CD4-positive, alpha-beta memory T cell (primary cell): ENCODE measurements at regions of chr5 and their contacts with region 1.

Region 1: DNA sequence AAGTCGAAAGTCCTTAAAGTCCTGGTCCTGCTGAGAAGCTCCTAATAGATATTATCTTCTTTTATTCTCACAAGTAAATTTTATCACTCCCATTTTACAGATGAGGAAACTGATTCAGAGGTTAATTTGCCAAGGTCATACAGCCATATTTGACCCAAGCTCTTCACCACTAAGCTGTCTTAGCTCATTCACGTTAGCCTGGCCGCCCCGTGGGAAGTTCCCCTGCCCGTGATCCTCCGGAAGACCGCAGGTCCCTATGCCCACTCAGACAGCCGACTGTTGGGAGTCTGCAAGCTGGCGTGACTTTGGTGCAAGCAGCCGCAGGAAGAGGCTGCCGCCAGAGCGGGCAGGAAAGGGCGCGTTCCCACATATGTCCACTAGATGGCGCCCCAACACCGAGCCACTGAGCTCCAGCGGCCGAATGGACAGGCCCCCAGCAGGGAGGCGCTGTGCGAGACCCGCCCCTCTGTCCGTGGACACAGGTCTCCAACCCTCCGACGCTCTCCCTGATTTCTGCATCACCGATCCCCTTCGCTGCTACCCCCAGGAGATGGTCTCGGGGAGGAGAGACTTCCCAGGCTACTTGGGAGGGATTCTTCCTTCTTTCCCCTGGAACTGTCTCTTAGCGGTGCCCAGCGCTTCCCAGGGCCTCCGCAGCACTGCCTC is 10.0 kb upstream of the ARAP3 start:
- DNase-seq: peak; percentile 76 to 83 (median 76)
- H3K4me3 ChIP-seq: peak overlapping the region; percentile 31 to 76
- H3K4me3 Mint-ChIP-seq: peak overlapping the region; percentile 72 to 89 (median 82)
- H3K27ac ChIP-seq: no peak overlapping the region
- H3K27ac Mint-ChIP-seq: peak overlapping the region in 6 of 7 donors; percentile 36 to 85 (median 66)
- H3K4me1 ChIP-seq: peaks cover 22% of the 10 kb centered on the region
- H3K4me1 Mint-ChIP-seq: peaks cover 20 to 31% (median 24%) of the 10 kb centered on the region in 4 donors
- H3K27me3 ChIP-seq: no peaks in the 10 kb centered on the region
- H3K27me3 Mint-ChIP-seq: peaks cover 4% of the 10 kb centered on the region in 2 donors

Region 2: GRCh38 chr5:141681695-141682641 is 10.0 kb before region 1 on chr5 and contains the start of gene ARAP3:
- CTCF ChIA-PET with region 1: interaction called, 79 read pairs
- POLR2A ChIA-PET with region 1: interaction called, 63 read pairs
- intact Hi-C with region 1: no loop called
- DNase-seq: peak in 2 of 5 donors; percentile 24 to 47
- H3K4me3 ChIP-seq: peak within 1 kb of the TSS in 1 of 2 donors; percentile 17
- H3K4me3 Mint-ChIP-seq: peak within 1 kb of the TSS; percentile 78 to 86 (median 83)
- H3K27ac ChIP-seq: no peak within 1 kb of the TSS
- H3K27ac Mint-ChIP-seq: peak within 1 kb of the TSS; percentile 47 to 91 (median 77)
- H3K4me1 ChIP-seq: peaks cover 33% of the 10 kb centered on the region
- H3K4me1 Mint-ChIP-seq: peaks cover 14 to 36% (median 26%) of the 10 kb centered on the region in 4 donors
- H3K27me3 ChIP-seq: no peaks in the 10 kb centered on the region
- H3K27me3 Mint-ChIP-seq: peaks cover 0 to 2% of the 10 kb centered on the region in 2 donors
- total RNA-seq, gene ARAP3: 14.7 to 16.4 TPM

Region 3: DNA sequence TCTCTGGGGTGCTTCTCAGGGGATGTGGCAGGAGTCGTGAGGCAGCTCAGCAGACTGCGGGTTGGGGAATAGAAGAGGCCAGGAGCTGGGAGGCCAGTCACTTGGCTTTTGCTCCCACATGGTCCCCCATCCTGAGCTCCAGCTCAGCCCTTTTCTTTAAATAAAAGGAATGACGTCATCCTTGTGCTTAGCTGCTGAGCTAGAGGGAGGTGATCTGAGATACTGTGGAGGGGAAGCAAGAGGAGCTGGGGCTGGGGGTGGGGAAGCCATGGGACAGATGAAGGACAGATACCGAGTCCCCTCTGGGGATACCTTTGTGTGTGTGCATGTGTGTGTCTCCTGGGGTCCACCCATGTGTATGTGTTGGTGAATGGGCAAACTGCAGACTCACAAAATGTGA is 79.0 kb after region 1 on chr5:
- CTCF ChIA-PET with region 1: no interaction called
- POLR2A ChIA-PET with region 1: no interaction called
- intact Hi-C with region 1: no loop called
- DNase-seq: no peak
- H3K4me3 ChIP-seq: no peak overlapping the region
- H3K4me3 Mint-ChIP-seq: no peak overlapping the region
- H3K27ac ChIP-seq: no peak overlapping the region
- H3K27ac Mint-ChIP-seq: no peak overlapping the region
- H3K4me1 ChIP-seq: no peaks in the 10 kb centered on the region
- H3K4me1 Mint-ChIP-seq: no peaks in the 10 kb centered on the region
- H3K27me3 ChIP-seq: no peaks in the 10 kb centered on the region
- H3K27me3 Mint-ChIP-seq: peaks cover 4 to 6% of the 10 kb centered on the region in 2 donors

Region 4: GRCh38 chr5:141849375-141850243 is 157.6 kb after region 1 on chr5:
- CTCF ChIA-PET with region 1: interaction called, 9 read pairs
- POLR2A ChIA-PET with region 1: interaction called, 22 read pairs
- intact Hi-C with region 1: no loop called
- DNase-seq: peak; percentile 54 to 74 (median 56)
- H3K4me3 ChIP-seq: peak overlapping the region; percentile 83 to 88
- H3K4me3 Mint-ChIP-seq: peak overlapping the region; percentile 90 to 93 (median 92)
- H3K27ac ChIP-seq: peak overlapping the region; percentile 66
- H3K27ac Mint-ChIP-seq: peak overlapping the region; percentile 75 to 93 (median 88)
- H3K4me1 ChIP-seq: peaks cover 9% of the 10 kb centered on the region
- H3K4me1 Mint-ChIP-seq: peaks cover 5 to 14% (median 11%) of the 10 kb centered on the region in 4 donors
- H3K27me3 ChIP-seq: no peaks in the 10 kb centered on the region
- H3K27me3 Mint-ChIP-seq: peaks cover 1 to 5% of the 10 kb centered on the region in 2 donors

Region 5: GRCh38 chr5:141889282-141889871 is 197.4 kb after region 1 on chr5:
- CTCF ChIA-PET with region 1: interaction called, 15 read pairs
- POLR2A ChIA-PET with region 1: no interaction called
- intact Hi-C with region 1: no loop called
- DNase-seq: no peak
- H3K4me3 ChIP-seq: no peak overlapping the region
- H3K4me3 Mint-ChIP-seq: no peak overlapping the region
- H3K27ac ChIP-seq: no peak overlapping the region
- H3K27ac Mint-ChIP-seq: no peak overlapping the region
- H3K4me1 ChIP-seq: no peaks in the 10 kb centered on the region
- H3K4me1 Mint-ChIP-seq: peaks cover 0 to 1% (median 0%) of the 10 kb centered on the region in 4 donors
- H3K27me3 ChIP-seq: peaks cover under 1% of the 10 kb centered on the region
- H3K27me3 Mint-ChIP-seq: peaks cover 26 to 34% of the 10 kb centered on the region in 2 donors

Region 6: GRCh38 chr5:141960449-141961202 is 268.6 kb after region 1 on chr5:
- CTCF ChIA-PET with region 1: interaction called, 250 read pairs
- POLR2A ChIA-PET with region 1: interaction called, 103 read pairs
- intact Hi-C with region 1: loop called (anchors 1 kb)
- DNase-seq: peak; percentile 85 to 89 (median 88)
- H3K4me3 ChIP-seq: no peak overlapping the region
- H3K4me3 Mint-ChIP-seq: peak overlapping the region in 7 of 8 donors; percentile 33 to 66 (median 57)
- H3K27ac ChIP-seq: peak overlapping the region; percentile 22
- H3K27ac Mint-ChIP-seq: peak overlapping the region; percentile 69 to 92 (median 87)
- H3K4me1 ChIP-seq: peaks cover 45% of the 10 kb centered on the region
- H3K4me1 Mint-ChIP-seq: peaks cover 28 to 45% (median 38%) of the 10 kb centered on the region in 4 donors
- H3K27me3 ChIP-seq: no peaks in the 10 kb centered on the region
- H3K27me3 Mint-ChIP-seq: no peaks in the 10 kb centered on the region

Region 7: GRCh38 chr5:142012792-142013388 is 320.9 kb after region 1 on chr5 and contains the start of gene GNPDA1:
- CTCF ChIA-PET with region 1: interaction called, 12 read pairs
- POLR2A ChIA-PET with region 1: interaction called, 9 read pairs
- intact Hi-C with region 1: loop called (anchors 2 kb)
- DNase-seq: peak; percentile 56 to 72 (median 62)
- H3K4me3 ChIP-seq: peak within 1 kb of the TSS; percentile 79 to 84
- H3K4me3 Mint-ChIP-seq: peak within 1 kb of the TSS; percentile 86 to 94 (median 88)
- H3K27ac ChIP-seq: peak within 1 kb of the TSS; percentile 70
- H3K27ac Mint-ChIP-seq: peak within 1 kb of the TSS; percentile 91 to 96 (median 95)
- H3K4me1 ChIP-seq: peaks cover 64% of the 10 kb centered on the region
- H3K4me1 Mint-ChIP-seq: peaks cover 44 to 71% (median 56%) of the 10 kb centered on the region in 4 donors
- H3K27me3 ChIP-seq: no peaks in the 10 kb centered on the region
- H3K27me3 Mint-ChIP-seq: no peaks in the 10 kb centered on the region
- total RNA-seq, gene GNPDA1: 23.0 to 24.1 TPM